ENCODE measurements at regions of chr11 and their contacts with region 1.

Region 1: GRCh38 chr11:73760679-73761402 is at the start of gene RAB6A:
- DNase-seq: peak; percentile 96

Region 2: GRCh38 chr11:73554671-73555320 is 206.0 kb before region 1 on chr11:
- CTCF ChIA-PET with region 1: no interaction called
- POLR2A ChIA-PET with region 1: no interaction called
- DNase-seq: no peak

Region 3: DNA sequence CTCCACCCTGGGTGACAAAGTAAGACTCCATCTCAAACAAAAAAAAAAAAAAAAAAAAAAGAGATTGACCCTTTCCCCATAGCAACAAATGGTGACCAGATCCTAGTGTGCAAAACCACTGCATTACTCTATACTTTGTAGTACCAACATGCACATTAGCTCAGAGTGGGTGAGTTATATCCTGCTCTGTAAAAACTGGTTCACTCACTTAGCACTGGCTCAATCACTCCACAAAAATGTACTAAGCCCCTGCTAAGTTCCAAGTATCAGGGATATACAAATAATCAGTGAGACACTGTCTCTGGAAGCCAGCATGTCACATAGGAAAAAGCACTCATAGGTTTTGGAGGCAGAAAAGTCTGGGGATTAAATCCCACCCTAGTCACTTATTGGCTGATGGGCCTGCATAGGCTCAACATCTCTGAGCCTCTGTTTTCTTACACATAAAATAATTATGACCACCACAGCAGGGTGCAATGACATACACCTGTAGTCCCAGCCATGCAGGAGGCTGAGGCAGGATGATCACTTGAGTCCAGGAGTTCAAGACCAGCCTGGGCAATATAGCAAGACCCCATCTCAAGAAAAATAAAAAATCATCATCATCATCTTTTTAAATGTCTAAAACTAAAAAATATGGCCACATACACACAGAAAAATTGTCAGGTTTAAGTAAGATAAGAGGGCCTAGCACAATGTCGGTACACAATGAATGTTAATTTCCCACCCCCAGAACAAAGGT is 174.8 kb before region 1 on chr11:
- CTCF ChIA-PET with region 1: no interaction called
- POLR2A ChIA-PET with region 1: no interaction called
- DNase-seq: no peak

Region 4: DNA sequence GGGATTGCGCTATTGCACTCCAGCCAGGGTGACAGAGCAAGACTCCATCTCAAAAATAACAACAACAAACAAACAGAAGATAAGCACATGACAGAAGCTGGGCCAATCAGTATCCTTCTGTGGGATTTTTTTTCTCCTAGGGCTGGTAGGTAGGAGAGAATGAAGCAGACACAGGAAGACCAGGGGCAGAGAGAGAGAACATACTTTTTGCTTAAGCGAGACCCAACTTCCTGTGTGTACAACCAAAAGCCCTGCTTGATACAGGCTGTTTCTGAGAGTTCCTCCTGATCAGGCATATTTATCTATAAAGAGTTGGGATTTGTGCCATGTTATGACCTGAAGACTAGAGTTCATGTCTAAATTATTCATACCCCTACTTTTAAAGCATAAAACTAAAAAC is 126.8 kb before region 1 on chr11:
- CTCF ChIA-PET with region 1: no interaction called
- POLR2A ChIA-PET with region 1: no interaction called
- DNase-seq: no peak

Region 5: DNA sequence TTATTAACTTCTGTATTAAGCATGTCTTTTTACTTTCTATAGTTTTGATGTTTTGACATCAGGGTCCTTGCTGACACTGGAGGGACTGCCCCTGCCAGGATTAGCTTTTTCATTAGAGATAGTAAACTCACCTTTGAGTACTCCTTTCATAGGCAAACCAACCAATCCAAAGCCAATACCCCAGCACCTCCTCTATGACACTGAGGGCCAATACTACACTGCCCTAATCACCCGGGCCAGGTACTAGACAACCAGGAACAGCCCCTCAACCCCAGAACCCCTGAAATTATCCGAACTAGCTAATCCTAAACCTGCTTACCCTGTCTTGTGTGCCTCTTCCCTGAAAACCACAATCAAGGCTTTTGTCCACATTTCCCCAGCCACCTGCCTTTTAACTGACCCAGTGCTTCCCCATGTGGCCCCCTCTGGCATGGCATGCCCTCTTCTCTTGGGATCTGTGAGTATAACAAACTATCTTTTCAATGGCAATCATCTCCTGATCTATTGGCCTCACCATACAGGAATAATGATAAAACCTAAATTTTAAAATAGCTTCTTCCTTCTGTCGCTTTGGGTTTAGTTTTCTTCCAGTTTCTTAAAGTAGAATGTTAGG is 31.1 kb before region 1 on chr11:
- CTCF ChIA-PET with region 1: no interaction called
- POLR2A ChIA-PET with region 1: no interaction called
- DNase-seq: peak; percentile 45

Region 6: GRCh38 chr11:73779084-73779902 is 18.5 kb after region 1 on chr11:
- CTCF ChIA-PET with region 1: no interaction called
- POLR2A ChIA-PET with region 1: interaction called, 154 read pairs
- DNase-seq: peak; percentile 96

Region 7: GRCh38 chr11:73787643-73788537 is 27.0 kb after region 1 on chr11 and contains the start of gene MRPL48:
- CTCF ChIA-PET with region 1: no interaction called
- POLR2A ChIA-PET with region 1: interaction called, 23 read pairs
- DNase-seq: peak; percentile 91